Colonic mucosa (tissue), 4 donors: ENCODE measurements at regions of chr1 and their contacts with region 1.

Region 1: GRCh38 chr1:192477630-192478029 is 97.9 kb upstream of the RGS1 start:
- DNase-seq: no peak
- H3K4me3 ChIP-seq: no peak overlapping the region
- H3K27ac ChIP-seq: no peak overlapping the region
- H3K4me1 ChIP-seq: no peaks in the 10 kb centered on the region
- H3K27me3 ChIP-seq: no peaks in the 10 kb centered on the region
- CTCF ChIP-seq: no peak

Region 2: DNA sequence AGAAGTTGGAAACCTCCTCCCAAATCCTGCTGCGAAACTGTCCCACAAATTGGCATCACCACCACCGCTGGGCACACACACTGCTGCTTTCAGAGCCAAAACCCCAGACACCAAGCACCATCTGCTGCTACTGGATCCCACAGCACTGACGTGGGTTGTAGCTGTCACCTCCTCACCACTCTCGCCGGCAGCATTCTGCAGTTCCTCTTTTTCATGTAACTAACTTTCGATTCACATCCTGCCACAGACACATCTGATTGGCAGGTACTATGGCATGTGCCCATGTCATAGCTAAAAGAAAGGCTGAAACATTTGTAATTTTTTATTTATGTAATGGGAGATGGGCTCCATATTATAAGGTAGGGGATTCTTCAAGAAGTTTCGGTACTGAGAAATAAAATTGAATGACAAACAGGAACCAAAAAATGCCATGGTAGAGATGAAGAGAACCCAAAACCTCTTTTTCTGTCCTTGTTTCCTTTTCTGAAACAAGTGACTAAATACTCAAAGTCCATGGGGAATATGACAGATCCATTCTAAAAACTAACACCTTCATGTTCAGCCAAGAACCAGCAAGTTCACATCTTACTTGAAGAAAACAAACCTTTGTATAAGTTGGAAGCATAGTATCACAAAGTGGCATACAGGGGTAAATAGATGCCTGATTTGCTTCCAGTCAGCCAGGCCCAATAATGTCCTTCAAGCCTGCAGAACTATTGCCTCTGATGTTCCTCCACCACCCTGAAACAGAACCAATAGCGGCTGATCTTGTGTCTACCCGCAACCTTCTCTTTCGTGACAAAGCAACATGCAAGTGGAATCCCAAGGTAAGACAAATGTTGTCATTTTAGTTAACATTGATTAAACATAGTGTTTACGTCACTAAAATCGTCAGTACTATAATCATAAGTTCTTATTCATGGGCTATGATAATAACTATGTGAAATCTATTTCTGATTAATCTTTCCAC is 131.8 kb after region 1 on chr1:
- intact Hi-C with region 1: loop called (anchors 5 kb)
- DNase-seq: peak; percentile 50
- H3K4me3 ChIP-seq: no peak overlapping the region
- H3K27ac ChIP-seq: no peak overlapping the region
- H3K4me1 ChIP-seq: no peaks in the 10 kb centered on the region
- H3K27me3 ChIP-seq: no peaks in the 10 kb centered on the region
- CTCF ChIP-seq: no peak

Region 3: GRCh38 chr1:192808518-192809306 is 331.1 kb after region 1 on chr1 and contains the start of gene RGS2:
- intact Hi-C with region 1: loop called (anchors 10 kb)
- DNase-seq: peak; percentile 92
- H3K4me3 ChIP-seq: peak within 1 kb of the TSS; percentile 68
- H3K27ac ChIP-seq: peak within 1 kb of the TSS; percentile 88
- H3K4me1 ChIP-seq: no peaks in the 10 kb centered on the region
- H3K27me3 ChIP-seq: no peaks in the 10 kb centered on the region
- CTCF ChIP-seq: no peak
- total RNA-seq, gene RGS2: 16.5 to 28.6 TPM

Region 4: GRCh38 chr1:193019442-193020026 is 541.9 kb after region 1 on chr1:
- intact Hi-C with region 1: loop called (anchors 10 kb)
- DNase-seq: no peak
- H3K4me3 ChIP-seq: no peak overlapping the region
- H3K27ac ChIP-seq: no peak overlapping the region
- H3K4me1 ChIP-seq: no peaks in the 10 kb centered on the region
- H3K27me3 ChIP-seq: no peaks in the 10 kb centered on the region
- CTCF ChIP-seq: peak; percentile 42